ENCODE measurements at regions of chr17 and their contacts with region 1.

Region 1: DNA sequence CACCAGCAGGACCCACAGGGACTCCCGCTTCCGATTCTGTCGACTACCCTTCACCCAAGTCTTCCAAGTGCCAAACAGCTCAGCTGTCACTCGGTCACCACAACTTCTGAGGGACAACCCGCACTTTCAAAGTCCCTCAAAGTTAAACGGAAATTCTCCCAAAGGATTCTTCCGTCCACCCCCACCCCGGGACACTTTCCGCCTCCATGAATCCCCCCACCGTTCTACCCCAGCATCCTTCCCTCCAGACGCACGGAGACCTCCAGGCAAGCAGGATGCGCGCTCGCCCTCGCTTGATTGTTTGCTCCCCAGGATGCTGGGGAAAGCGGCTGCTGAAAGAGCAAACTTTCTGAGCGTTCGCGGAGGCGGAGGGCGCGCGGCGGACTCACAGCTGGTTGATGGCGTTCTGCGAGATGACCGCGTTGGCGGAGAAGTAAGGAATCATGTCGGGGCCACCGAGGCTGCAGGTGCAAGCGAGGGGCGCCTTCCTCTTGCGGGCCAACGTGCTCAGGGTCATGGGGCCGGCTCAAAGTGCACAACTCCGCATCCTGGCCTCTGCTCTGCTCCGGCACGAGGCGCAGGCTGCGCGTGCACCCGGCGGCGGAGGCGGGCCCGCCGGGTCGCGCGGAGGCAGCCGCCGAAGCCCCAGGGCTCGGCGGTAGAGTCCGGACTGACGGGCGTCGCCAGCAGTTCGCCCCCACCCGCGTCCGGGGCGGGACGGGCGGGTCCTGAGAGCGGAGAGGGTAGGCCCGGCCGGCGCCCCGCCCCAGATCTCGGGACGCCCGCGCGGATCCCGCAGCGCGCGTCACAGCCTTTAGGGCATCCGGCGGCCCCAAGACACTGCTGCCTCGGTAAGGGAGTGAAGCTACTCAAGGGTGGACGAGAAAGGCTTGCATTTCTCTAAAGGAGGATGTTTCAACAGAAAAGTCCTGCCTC is 138.3 kb upstream of the CORO6 start:
- DNase-seq: peak; percentile 87 to 94
- H3K4me3 ChIP-seq: peak overlapping the region; percentile 66 to 81
- H3K27ac ChIP-seq: peak overlapping the region; percentile 67 to 71
- H3K4me1 ChIP-seq: peaks cover 0 to 10% (median 3%) of the 10 kb centered on the region in 4 donors
- H3K27me3 ChIP-seq: no peaks in the 10 kb centered on the region
- CTCF ChIP-seq: no peak

Region 2: DNA sequence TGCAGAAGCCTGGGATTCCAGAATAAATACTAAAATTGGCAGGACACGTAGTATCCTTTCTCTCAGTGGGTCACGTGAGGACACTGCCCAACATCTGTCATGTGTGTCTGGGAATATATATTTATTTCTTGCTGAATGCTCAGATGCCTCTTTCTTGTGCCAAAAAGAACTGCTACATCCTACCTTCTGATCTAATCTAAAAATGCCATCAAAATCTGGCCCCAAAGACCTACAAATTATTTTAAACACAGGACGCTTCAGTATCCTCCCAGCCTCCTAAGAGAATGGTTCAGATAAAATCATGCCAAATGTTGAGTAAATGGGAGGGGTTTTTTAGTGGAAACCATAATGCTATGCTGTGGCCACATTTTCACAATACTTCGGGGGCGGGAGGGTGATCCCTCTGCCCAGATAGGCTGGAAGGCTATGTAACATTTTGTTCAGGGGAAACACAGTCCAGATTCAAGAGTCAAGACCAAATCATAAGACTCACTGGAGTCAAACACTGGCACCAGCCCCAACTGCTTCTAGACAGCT is 115.4 kb before region 1 on chr17:
- intact Hi-C with region 1: loop called (anchors 5 kb)
- DNase-seq: peak; percentile 95 to 96
- H3K4me3 ChIP-seq: no peak overlapping the region
- H3K27ac ChIP-seq: peak overlapping the region; percentile 70 to 83
- H3K4me1 ChIP-seq: peaks cover 0 to 55% (median 25%) of the 10 kb centered on the region in 4 donors
- H3K27me3 ChIP-seq: no peaks in the 10 kb centered on the region
- CTCF ChIP-seq: no peak

Region 3: GRCh38 chr17:29855686-29856085 is 94.7 kb after region 1 on chr17:
- intact Hi-C with region 1: no loop called
- DNase-seq: no peak
- H3K4me3 ChIP-seq: no peak overlapping the region
- H3K27ac ChIP-seq: no peak overlapping the region
- H3K4me1 ChIP-seq: no peaks in the 10 kb centered on the region
- H3K27me3 ChIP-seq: no peaks in the 10 kb centered on the region
- CTCF ChIP-seq: no peak

Region 4: DNA sequence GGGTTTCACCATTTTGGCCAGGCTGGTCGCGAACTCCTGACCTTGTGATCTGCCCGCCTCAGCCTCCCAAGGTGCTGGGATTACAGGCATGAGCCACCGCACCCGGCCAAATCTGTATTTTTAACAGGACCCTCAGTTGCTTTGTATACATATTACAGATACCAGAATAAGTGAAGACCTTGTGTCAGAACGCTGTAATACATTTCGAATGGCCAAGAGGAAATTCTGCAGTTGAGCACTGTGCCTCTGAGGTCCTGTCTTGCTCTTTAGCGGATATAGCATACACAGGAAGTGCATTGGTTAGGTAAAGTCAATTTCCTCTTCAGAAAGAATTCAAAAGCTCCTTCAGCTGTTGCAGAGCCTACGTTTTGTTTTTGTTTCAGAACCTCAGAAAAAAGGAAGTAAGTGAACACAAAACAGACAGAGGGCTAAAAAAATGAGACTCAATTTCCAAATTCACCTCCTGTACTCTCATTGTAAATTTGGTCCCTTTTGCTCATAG is 1047.8 kb after region 1 on chr17:
- intact Hi-C with region 1: no loop called
- DNase-seq: no peak
- H3K4me3 ChIP-seq: no peak overlapping the region
- H3K27ac ChIP-seq: no peak overlapping the region
- H3K4me1 ChIP-seq: peaks cover 0 to 10% (median 0%) of the 10 kb centered on the region in 4 donors
- H3K27me3 ChIP-seq: no peaks in the 10 kb centered on the region
- CTCF ChIP-seq: no peak

Measured in tibial artery (tissue), 4 donors.